ENCODE measurements at regions of chr16 and their contacts with region 1.

Region 1: DNA sequence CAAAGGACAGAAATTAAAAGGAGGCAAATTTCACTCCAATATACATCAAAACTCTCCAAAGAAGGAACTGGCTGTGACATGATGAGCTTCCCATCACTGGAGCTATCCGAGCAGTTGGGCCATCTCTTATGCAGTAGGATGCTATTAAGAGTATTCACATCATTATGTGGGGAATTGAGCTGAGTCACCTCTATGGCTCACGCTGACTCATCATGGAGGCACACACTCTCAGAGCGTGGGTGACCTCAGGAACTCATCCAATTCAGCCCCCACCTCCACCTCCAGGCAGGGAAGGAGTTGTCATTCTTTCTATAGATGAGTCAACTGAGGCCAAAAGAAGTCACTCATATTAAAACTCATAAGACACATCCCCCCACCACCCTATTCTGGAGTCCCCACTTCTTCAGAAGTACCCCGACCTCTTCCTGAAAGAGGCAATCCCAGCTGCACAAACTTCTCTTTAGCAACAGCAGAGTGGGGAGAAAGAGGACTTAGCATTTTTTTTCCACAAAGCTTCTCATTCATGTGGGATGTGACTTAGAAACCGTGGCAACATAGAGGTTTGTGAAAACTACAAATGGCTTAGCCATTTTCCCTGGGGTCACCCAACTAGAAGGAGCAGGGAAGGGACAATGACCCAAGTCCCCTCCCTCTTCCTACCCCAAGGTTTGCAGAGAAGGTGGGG is 32.5 kb downstream of the ABCC12 start:
- DNase-seq: peak; percentile 100
- ATAC-seq: peak; percentile 78
- H3K4me3 ChIP-seq: no peak overlapping the region
- H3K27ac ChIP-seq: peak overlapping the region; percentile 93
- H3K4me1 ChIP-seq: peaks cover 27% of the 10 kb centered on the region
- H3K27me3 ChIP-seq: no peaks in the 10 kb centered on the region
- CTCF ChIP-seq: no peak
- POLR2A ChIP-seq: peak; percentile 57
- RAD21 ChIP-seq: peak; percentile 12; the same call in 1 of the 2 replicates

Region 2: GRCh38 chr16:47732523-47733111 is 390.6 kb before region 1 on chr16:
- CTCF ChIA-PET with region 1: no interaction called
- POLR2A ChIA-PET with region 1: no interaction called
- dilution Hi-C with region 1: no loop called
- in situ Hi-C with region 1: no loop called
- intact Hi-C with region 1: loop called (anchors 10 kb)
- DNase-seq: peak; percentile 99
- ATAC-seq: peak; percentile 66
- H3K4me3 ChIP-seq: no peak overlapping the region
- H3K27ac ChIP-seq: peak overlapping the region; percentile 76; the same call in 1 of the 2 replicates
- H3K4me1 ChIP-seq: peaks cover 12% of the 10 kb centered on the region
- H3K27me3 ChIP-seq: no peaks in the 10 kb centered on the region
- CTCF ChIP-seq: no peak
- POLR2A ChIP-seq: no peak
- RAD21 ChIP-seq: no peak

Region 3: DNA sequence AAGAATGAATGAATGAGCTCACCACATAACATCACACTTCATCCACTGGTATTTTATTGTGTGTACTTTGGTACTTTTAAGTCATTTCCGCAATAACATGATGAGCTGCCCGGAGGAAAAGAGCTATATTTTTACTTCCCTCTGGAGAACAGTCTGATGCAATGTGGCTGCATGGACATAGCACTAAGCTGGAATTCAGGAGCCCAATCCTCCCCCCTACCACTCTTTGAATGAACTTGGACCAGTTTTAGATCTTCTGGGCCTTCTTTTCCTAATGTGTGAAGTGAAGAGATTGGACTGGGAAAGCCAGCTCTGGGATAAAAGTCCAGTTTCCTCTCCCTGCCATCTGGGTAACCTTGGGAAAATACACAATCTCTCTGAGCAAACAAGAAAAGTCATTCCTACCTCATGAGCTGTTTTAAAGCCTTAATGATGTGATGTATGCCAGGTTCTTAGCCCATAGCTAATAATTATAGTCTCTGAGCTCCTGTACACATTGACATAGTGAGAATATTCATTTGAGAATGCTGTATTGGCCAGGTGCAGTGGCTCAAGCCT is 46.7 kb before region 1 on chr16:
- CTCF ChIA-PET with region 1: no interaction called
- POLR2A ChIA-PET with region 1: no interaction called
- dilution Hi-C with region 1: no loop called
- in situ Hi-C with region 1: no loop called
- intact Hi-C with region 1: loop called (anchors 2 kb)
- DNase-seq: peak; percentile 75
- ATAC-seq: peak; percentile 50
- H3K4me3 ChIP-seq: no peak overlapping the region
- H3K27ac ChIP-seq: peak overlapping the region; percentile 71
- H3K4me1 ChIP-seq: peaks cover 12% of the 10 kb centered on the region
- H3K27me3 ChIP-seq: no peaks in the 10 kb centered on the region
- CTCF ChIP-seq: no peak
- POLR2A ChIP-seq: no peak
- RAD21 ChIP-seq: no peak

Region 4: DNA sequence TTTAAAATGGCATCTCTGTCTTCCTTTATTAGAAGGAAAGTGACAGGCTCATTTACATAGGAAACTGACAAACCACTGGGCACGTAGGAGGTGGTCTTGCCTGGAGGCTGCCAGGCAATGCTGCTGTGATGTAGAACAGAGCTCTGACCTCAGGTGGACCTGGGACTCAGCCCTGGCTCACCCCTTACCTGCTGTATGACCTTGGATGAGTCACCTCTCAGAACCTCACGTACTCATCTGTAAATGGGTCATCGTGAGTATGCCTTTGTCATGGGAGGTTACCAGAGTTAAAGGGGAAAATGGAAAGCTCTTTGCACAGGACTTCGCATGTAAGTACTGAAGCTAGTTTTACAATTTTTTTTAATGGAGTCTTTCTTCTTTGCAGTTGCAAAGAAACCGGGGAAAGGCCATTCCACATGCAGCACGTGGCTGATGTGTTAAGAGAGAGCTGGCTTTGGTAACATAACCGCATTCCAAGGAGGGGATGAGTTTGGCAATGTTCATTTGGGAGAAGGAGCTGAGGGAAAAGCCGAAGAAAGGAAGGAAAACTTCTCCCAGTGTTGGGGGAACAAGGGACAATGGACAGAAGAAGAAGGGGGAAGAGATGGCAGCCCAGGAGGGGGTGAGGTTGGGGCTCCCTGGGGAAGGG is 83.5 kb after region 1 on chr16:
- CTCF ChIA-PET with region 1: no interaction called
- POLR2A ChIA-PET with region 1: no interaction called
- dilution Hi-C with region 1: no loop called
- in situ Hi-C with region 1: no loop called
- intact Hi-C with region 1: no loop called
- DNase-seq: peak; percentile 13
- ATAC-seq: 0 out of 2 replicates have a peak, but pooled peaks have one; percentile 40
- H3K4me3 ChIP-seq: no peak overlapping the region
- H3K27ac ChIP-seq: no peak overlapping the region
- H3K4me1 ChIP-seq: no peaks in the 10 kb centered on the region
- H3K27me3 ChIP-seq: peaks cover 25% of the 10 kb centered on the region
- CTCF ChIP-seq: no peak
- POLR2A ChIP-seq: no peak
- RAD21 ChIP-seq: no peak

Region 5: GRCh38 chr16:48852951-48853350 is 729.7 kb after region 1 on chr16:
- CTCF ChIA-PET with region 1: no interaction called
- POLR2A ChIA-PET with region 1: no interaction called
- dilution Hi-C with region 1: no loop called
- in situ Hi-C with region 1: no loop called
- intact Hi-C with region 1: no loop called
- DNase-seq: no peak
- ATAC-seq: no peak
- H3K4me3 ChIP-seq: no peak overlapping the region
- H3K27ac ChIP-seq: no peak overlapping the region
- H3K4me1 ChIP-seq: no peaks in the 10 kb centered on the region
- H3K27me3 ChIP-seq: no peaks in the 10 kb centered on the region
- CTCF ChIP-seq: no peak
- POLR2A ChIP-seq: no peak
- RAD21 ChIP-seq: no peak